PC-9 (cell line): ENCODE measurements at regions of chr3 and their contacts with region 1.

Region 1: GRCh38 chr3:36957862-36958686 is 13.2 kb upstream of the TRANK1 start:
- DNase-seq: no peak
- H3K4me3 ChIP-seq: no peak overlapping the region
- H3K27ac ChIP-seq: no peak overlapping the region
- H3K4me1 ChIP-seq: no peaks in the 10 kb centered on the region
- H3K27me3 ChIP-seq: no peaks in the 10 kb centered on the region
- CTCF ChIP-seq: no peak

Region 2: GRCh38 chr3:35965908-35966307 is 992.2 kb before region 1 on chr3:
- CTCF ChIA-PET with region 1: interaction called, 5 read pairs
- POLR2A ChIA-PET with region 1: no interaction called
- intact Hi-C with region 1: loop called (anchors 10 kb)
- DNase-seq: peak in 1 of 2 experiments; percentile 43
- H3K4me3 ChIP-seq: no peak overlapping the region
- H3K27ac ChIP-seq: no peak overlapping the region
- H3K4me1 ChIP-seq: no peaks in the 10 kb centered on the region
- H3K27me3 ChIP-seq: no peaks in the 10 kb centered on the region
- CTCF ChIP-seq: peak; percentile 66

Region 3: DNA sequence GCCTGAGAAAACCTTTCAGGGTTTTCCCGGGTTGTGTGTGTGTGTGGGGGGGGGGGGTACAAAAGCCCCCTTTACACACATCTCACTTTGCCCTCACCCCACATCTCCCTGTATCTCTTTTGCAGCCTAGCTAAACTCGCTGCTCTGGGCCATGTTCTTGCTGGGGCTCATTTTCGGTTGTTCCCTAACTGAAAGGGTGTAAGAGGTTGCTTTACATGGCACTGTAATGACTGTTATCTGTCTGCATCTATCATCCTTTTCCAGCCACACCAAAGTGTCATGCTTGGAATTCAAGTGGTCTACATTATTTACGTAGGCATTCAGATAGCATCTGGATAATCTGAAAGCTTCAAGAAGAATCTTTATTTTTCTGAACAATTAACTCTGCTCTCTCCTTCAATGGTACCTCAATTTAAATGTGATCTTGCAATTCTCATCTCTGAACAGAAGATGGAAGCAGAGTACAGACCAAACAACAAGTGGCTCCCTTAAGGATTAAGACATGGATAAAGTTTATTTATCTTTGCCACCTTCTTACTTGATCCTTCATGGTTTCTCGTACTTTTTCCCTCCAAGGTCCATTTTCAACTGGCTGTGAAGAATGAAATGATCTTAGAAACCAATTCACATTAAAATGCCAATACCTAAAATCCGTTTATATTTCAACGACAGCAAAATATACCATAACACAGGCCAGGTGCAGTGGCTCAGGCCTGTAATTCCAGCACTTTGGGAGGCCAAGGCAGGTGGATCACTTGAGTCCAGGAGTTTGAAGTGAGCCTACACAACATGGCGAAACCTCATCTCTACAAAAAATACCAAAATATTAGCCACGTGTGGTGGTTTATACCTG is 228.6 kb before region 1 on chr3:
- CTCF ChIA-PET with region 1: no interaction called
- POLR2A ChIA-PET with region 1: no interaction called
- intact Hi-C with region 1: loop called (anchors 1 kb)
- DNase-seq: peak in 1 of 2 experiments; percentile 44
- H3K4me3 ChIP-seq: no peak overlapping the region
- H3K27ac ChIP-seq: no peak overlapping the region
- H3K4me1 ChIP-seq: no peaks in the 10 kb centered on the region
- H3K27me3 ChIP-seq: 0 out of 2 replicates have a peak, but pooled peaks cover 4% of the 10 kb centered on the region
- CTCF ChIP-seq: peak; percentile 78

Region 4: DNA sequence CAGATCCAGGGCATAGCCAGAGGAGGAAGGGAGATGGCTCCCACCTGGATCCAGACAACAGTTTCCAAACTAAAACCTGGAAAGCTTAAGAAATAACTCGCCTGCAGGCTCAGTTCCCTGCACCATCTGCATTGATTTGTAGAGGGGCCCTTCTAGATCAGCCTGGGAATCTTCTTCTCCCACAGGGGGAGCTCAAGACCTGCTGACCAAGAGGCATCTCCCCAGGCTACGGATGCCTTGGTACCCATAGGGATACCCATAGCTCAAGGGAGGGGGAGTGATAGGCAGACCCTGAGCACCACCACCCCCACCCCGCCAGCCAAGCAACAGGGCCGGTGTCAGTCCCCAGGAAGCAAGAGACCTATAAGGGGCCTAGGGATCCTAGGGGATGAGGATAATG is 165.7 kb before region 1 on chr3:
- CTCF ChIA-PET with region 1: interaction called, 4 read pairs
- POLR2A ChIA-PET with region 1: no interaction called
- intact Hi-C with region 1: loop called (anchors 2 kb)
- DNase-seq: peak in 1 of 2 experiments; percentile 13
- H3K4me3 ChIP-seq: no peak overlapping the region
- H3K27ac ChIP-seq: no peak overlapping the region
- H3K4me1 ChIP-seq: no peaks in the 10 kb centered on the region
- H3K27me3 ChIP-seq: no peaks in the 10 kb centered on the region
- CTCF ChIP-seq: peak; percentile 52

Region 5: GRCh38 chr3:36868614-36869436 is 89.2 kb before region 1 on chr3:
- CTCF ChIA-PET with region 1: interaction called, 3 read pairs
- POLR2A ChIA-PET with region 1: no interaction called
- intact Hi-C with region 1: loop called (anchors 2 kb)
- DNase-seq: peak; percentile 32 to 58
- H3K4me3 ChIP-seq: no peak overlapping the region
- H3K27ac ChIP-seq: no peak overlapping the region
- H3K4me1 ChIP-seq: no peaks in the 10 kb centered on the region
- H3K27me3 ChIP-seq: no peaks in the 10 kb centered on the region
- CTCF ChIP-seq: peak; percentile 79

Region 6: DNA sequence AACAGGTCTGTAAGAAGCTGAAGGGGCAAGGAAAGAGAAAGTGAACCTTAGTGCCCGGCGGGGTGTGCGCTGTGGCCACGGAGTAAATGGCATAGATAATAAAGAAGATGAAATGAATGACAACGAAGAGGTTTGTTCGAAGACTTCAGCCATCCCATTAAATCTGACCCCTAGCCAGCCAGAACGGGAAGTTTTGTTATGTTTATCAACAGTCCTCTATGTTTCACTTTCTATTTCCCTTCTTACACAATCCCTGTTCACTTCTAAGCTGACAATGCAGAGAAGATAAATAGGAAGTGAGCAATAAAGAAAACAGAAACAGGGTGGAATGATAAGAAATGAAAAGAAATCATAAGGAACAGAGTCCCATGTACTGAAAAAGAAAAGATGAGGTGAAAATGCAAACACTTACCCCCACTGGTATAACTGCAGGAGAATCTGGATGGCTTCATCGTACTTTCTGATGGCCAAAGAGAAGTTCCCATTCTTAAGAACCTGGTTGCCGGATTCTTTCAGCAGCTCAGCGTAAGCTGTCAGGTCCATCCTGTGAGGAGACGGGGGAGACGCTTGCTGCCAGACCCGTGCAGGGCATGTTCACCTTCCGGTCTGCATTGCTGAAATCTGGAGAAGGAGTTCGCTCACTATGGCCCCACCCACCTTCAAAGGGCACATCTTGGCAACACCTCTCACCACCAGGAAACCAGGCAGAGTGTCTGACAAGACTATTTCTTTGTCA is 50.0 kb before region 1 on chr3:
- CTCF ChIA-PET with region 1: no interaction called
- POLR2A ChIA-PET with region 1: no interaction called
- intact Hi-C with region 1: loop called (anchors 2 kb)
- DNase-seq: peak; percentile 49 to 52
- H3K4me3 ChIP-seq: peak overlapping the region; percentile 61
- H3K27ac ChIP-seq: peak overlapping the region; percentile 15; the same call in 1 of the 2 replicates
- H3K4me1 ChIP-seq: peaks cover 16% of the 10 kb centered on the region; the same call in 1 of the 2 replicates
- H3K27me3 ChIP-seq: no peaks in the 10 kb centered on the region
- CTCF ChIP-seq: no peak